Psoas muscle (tissue), 8 donors: ENCODE measurements at regions of chr7 and their contacts with region 1.

Region 1: GRCh38 chr7:132551886-132552285 is 24.4 kb downstream of the PLXNA4 start:
- DNase-seq: no peak
- ATAC-seq: no peak
- H3K4me3 ChIP-seq: no peak overlapping the region
- H3K27ac ChIP-seq: no peak overlapping the region
- H3K4me1 ChIP-seq: no peaks in the 10 kb centered on the region
- H3K27me3 ChIP-seq: peaks cover 0 to 2% (median 0%) of the 10 kb centered on the region in 3 donors
- CTCF ChIP-seq: no peak

Region 2: GRCh38 chr7:132485600-132486273 is 66.1 kb before region 1 on chr7:
- intact Hi-C with region 1: loop called in 1 of 2 experiments (anchors 2 kb)
- DNase-seq: no peak
- ATAC-seq: no peak
- H3K4me3 ChIP-seq: no peak overlapping the region
- H3K27ac ChIP-seq: no peak overlapping the region
- H3K4me1 ChIP-seq: no peaks in the 10 kb centered on the region
- H3K27me3 ChIP-seq: no peaks in the 10 kb centered on the region
- CTCF ChIP-seq: no peak